ENCODE measurements at regions of chr15 and their contacts with region 1.

Region 1: GRCh38 chr15:34337557-34338306 is at the start of gene SLC12A6:
- DNase-seq: peak; percentile 89 to 96 (median 92)
- ATAC-seq: peak; percentile 95
- H3K4me3 ChIP-seq: peak within 1 kb of the TSS; percentile 58 to 93
- H3K27ac ChIP-seq: peak within 1 kb of the TSS; percentile 79 to 91 (median 86)
- H3K4me1 ChIP-seq: peaks cover 25% of the 10 kb centered on the region
- H3K27me3 ChIP-seq: no peaks in the 10 kb centered on the region
- CTCF ChIP-seq: peak in 1 of 7 experiments; percentile 12
- POLR2A ChIP-seq: peak; percentile 29 to 71 (median 50)
- total RNA-seq, gene SLC12A6: 15.0 to 16.2 TPM

Region 2: GRCh38 chr15:34182942-34183341 is 154.8 kb before region 1 on chr15:
- intact Hi-C with region 1: no loop called
- DNase-seq: peak; percentile 41 to 59 (median 55)
- ATAC-seq: peak; percentile 60
- H3K4me3 ChIP-seq: no peak overlapping the region
- H3K27ac ChIP-seq: peak overlapping the region in 3 of 4 donors; percentile 5 to 53 (median 51)
- H3K4me1 ChIP-seq: peaks cover 19% of the 10 kb centered on the region
- H3K27me3 ChIP-seq: no peaks in the 10 kb centered on the region
- CTCF ChIP-seq: no peak
- POLR2A ChIP-seq: no peak

Region 3: GRCh38 chr15:34223904-34224596 is 113.7 kb before region 1 on chr15:
- intact Hi-C with region 1: loop called (anchors 10 kb)
- DNase-seq: peak in 1 of 4 donors; percentile 16
- ATAC-seq: peak; percentile 13
- H3K4me3 ChIP-seq: peak overlapping the region; percentile 87 to 99
- H3K27ac ChIP-seq: peak overlapping the region; percentile 81 to 92 (median 84)
- H3K4me1 ChIP-seq: peaks cover 23% of the 10 kb centered on the region
- H3K27me3 ChIP-seq: no peaks in the 10 kb centered on the region
- CTCF ChIP-seq: peak in 1 of 7 experiments; percentile 5
- POLR2A ChIP-seq: no peak

Region 4: GRCh38 chr15:34587717-34588674 is 250.3 kb after region 1 on chr15:
- intact Hi-C with region 1: no loop called
- DNase-seq: peak; percentile 65 to 79 (median 73)
- ATAC-seq: peak; percentile 69
- H3K4me3 ChIP-seq: no peak overlapping the region
- H3K27ac ChIP-seq: no peak overlapping the region
- H3K4me1 ChIP-seq: peaks cover 7% of the 10 kb centered on the region
- H3K27me3 ChIP-seq: no peaks in the 10 kb centered on the region
- CTCF ChIP-seq: peak; percentile 63 to 91 (median 83)
- POLR2A ChIP-seq: peak in 2 of 3 donors; percentile 56 to 59

Measured in body of pancreas (tissue), 4 donors.